Vagina (tissue), 2 donors: ENCODE measurements at regions of chr14 and their contacts with region 1.

Region 1: DNA sequence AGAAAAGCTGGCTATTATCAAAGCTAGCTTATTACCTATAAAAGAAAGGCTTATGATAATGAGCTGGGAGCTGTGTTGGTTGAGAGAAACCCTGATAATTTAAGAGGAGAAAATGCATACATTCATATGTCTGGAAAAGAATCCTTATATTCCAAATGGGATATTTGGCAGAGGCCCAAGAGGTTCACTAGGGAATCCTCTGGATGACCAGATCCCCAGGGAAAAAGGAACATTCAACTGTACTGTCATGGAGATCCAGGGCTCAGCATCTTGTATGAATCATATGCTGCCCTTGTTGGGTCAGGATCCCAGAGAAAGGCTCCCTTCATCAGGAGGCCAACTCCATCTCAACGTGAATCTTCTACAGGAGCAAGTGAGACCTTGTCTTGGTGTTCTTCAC is 16.6 kb upstream of the FBXO34 start:
- DNase-seq: no peak
- H3K4me3 ChIP-seq: no peak overlapping the region
- H3K27ac ChIP-seq: no peak overlapping the region
- H3K4me1 ChIP-seq: no peaks in the 10 kb centered on the region
- H3K27me3 ChIP-seq: no peaks in the 10 kb centered on the region
- CTCF ChIP-seq: no peak
- POLR2A ChIP-seq: no peak

Region 2: DNA sequence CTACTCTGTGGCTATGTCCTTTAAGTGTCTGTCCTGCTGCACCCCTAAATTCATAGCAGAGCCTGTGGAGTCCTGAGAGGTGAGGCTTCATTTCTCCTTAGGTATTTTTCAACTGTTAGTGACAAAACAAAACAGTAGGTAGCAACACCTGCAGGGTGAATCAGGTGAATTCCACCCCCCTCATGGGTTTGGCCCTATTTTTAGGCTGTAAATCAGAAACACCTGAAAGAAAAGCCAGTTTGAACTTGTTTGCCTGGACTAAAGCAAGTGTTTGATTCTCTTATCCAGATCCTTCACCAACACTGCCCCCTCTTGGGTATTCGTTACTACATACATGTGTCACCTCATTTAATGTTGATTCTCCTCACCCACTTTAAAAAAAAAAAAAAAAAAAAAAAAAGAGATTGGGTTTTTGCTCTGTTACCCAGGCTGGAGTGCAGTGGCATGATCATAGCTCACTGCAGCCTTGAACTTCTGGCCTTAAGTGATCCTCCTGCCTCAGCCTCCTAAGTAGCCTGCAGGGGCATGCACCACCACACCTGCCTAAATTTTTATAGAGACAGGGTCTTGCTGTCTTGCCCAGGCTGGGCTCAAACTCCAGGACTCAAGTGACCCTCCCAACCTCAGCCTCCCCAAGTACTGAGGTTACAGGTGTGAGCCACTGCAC is 175.6 kb after region 1 on chr14:
- intact Hi-C with region 1: loop called (anchors 10 kb)
- DNase-seq: peak in 1 of 2 donors; percentile 52
- H3K4me3 ChIP-seq: no peak overlapping the region
- H3K27ac ChIP-seq: no peak overlapping the region
- H3K4me1 ChIP-seq: no peaks in the 10 kb centered on the region
- H3K27me3 ChIP-seq: no peaks in the 10 kb centered on the region
- CTCF ChIP-seq: peak; percentile 13 to 43 (median 18)
- POLR2A ChIP-seq: no peak